ENCODE measurements at regions of chr12 and their contacts with region 1.

Region 1: DNA sequence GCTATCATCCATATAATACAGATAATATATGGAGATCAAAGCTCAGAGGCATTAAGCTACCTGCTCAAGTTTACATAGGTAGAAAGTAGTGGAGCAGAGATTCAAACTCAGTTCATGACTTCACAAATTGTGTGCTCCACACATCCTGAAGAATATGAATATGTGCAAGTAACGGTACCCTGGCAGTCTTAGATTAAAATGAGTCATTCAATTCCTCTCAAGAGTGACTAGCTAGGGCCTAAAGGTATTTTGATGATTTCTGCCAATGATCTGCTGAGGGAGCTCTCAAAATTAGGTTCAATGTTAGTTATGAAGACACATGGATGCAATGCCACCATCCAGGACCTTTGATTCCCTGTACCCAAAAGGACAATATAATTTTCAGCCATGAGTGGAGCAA is 58.9 kb downstream of the GRIP1 start:
- DNase-seq: no peak
- ATAC-seq: no peak
- H3K4me3 ChIP-seq: no peak overlapping the region
- H3K27ac ChIP-seq: no peak overlapping the region; the same call in 1 of the 2 replicates
- H3K4me1 ChIP-seq: peaks cover 47% of the 10 kb centered on the region
- H3K27me3 ChIP-seq: no peaks in the 10 kb centered on the region
- CTCF ChIP-seq: no peak
- EP300 ChIP-seq: no peak
- POLR2A ChIP-seq: no peak
- RAD21 ChIP-seq: no peak

Region 2: GRCh38 chr12:66398931-66399910 is 220.8 kb before region 1 on chr12:
- CTCF ChIA-PET with region 1: no interaction called
- POLR2A ChIA-PET with region 1: no interaction called
- RAD21 ChIA-PET with region 1: no interaction called
- SMC1A ChIA-PET with region 1: no interaction called
- in situ Hi-C with region 1: no loop called
- intact Hi-C with region 1: no loop called
- DNase-seq: no peak
- ATAC-seq: no peak
- H3K4me3 ChIP-seq: no peak overlapping the region
- H3K27ac ChIP-seq: no peak overlapping the region
- H3K4me1 ChIP-seq: no peaks in the 10 kb centered on the region
- H3K27me3 ChIP-seq: no peaks in the 10 kb centered on the region
- CTCF ChIP-seq: no peak
- EP300 ChIP-seq: no peak
- POLR2A ChIP-seq: no peak
- RAD21 ChIP-seq: no peak

Region 3: DNA sequence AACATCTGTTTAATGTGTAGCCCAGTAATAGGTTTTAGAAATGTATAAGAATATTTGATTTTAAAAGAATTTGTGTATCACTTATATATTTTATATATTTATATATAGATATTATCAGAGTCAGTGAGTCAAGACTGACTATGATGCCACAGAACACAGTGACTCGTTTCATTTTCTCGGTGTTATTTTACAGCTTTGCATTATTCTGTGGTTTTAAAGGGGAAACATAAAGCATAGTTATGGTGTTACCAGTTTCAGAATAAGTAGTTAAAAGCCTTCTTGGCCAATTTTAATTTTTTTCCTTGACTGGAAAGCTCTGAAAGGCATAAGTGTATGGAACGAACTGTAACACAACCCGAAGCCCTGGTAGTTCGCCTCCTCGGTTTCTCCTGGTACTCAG is 32.1 kb before region 1 on chr12:
- CTCF ChIA-PET with region 1: no interaction called
- POLR2A ChIA-PET with region 1: interaction called, 10 read pairs
- RAD21 ChIA-PET with region 1: no interaction called
- SMC1A ChIA-PET with region 1: no interaction called
- in situ Hi-C with region 1: no loop called
- intact Hi-C with region 1: no loop called
- DNase-seq: no peak
- ATAC-seq: peak; percentile 36; the same call in 1 of the 3 replicates
- H3K4me3 ChIP-seq: no peak overlapping the region
- H3K27ac ChIP-seq: peak overlapping the region; percentile 33; the same call in 1 of the 2 replicates
- H3K4me1 ChIP-seq: peaks cover 6% of the 10 kb centered on the region
- H3K27me3 ChIP-seq: no peaks in the 10 kb centered on the region
- CTCF ChIP-seq: no peak
- EP300 ChIP-seq: no peak
- POLR2A ChIP-seq: no peak
- RAD21 ChIP-seq: no peak

Region 4: DNA sequence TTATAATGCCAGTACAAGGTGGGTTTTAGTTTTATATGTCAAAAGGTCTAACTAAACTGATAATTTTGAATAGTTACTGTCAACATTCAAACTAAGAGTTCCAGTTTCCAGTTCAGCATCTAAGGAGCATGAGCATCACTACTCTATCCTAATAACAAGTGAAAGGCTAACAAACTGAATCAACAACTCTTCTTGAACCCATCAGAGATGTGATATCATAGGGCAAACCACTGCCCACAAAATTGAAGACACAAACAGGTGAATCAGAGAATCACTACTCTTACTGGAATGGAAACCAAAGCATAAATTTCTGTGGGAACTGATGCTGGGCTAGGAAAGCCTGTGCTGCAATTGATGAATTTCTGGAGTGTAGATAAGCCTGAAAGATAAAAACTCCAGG is 199.6 kb after region 1 on chr12:
- CTCF ChIA-PET with region 1: no interaction called
- POLR2A ChIA-PET with region 1: no interaction called
- RAD21 ChIA-PET with region 1: no interaction called
- SMC1A ChIA-PET with region 1: no interaction called
- in situ Hi-C with region 1: no loop called
- intact Hi-C with region 1: no loop called
- DNase-seq: no peak
- ATAC-seq: no peak
- H3K4me3 ChIP-seq: no peak overlapping the region
- H3K27ac ChIP-seq: no peak overlapping the region
- H3K4me1 ChIP-seq: no peaks in the 10 kb centered on the region
- H3K27me3 ChIP-seq: no peaks in the 10 kb centered on the region
- CTCF ChIP-seq: no peak
- EP300 ChIP-seq: no peak
- POLR2A ChIP-seq: no peak
- RAD21 ChIP-seq: no peak

Region 5: GRCh38 chr12:66942741-66943465 is 322.9 kb after region 1 on chr12:
- CTCF ChIA-PET with region 1: no interaction called
- POLR2A ChIA-PET with region 1: no interaction called
- RAD21 ChIA-PET with region 1: no interaction called
- SMC1A ChIA-PET with region 1: no interaction called
- in situ Hi-C with region 1: no loop called
- intact Hi-C with region 1: no loop called
- DNase-seq: no peak
- ATAC-seq: no peak
- H3K4me3 ChIP-seq: no peak overlapping the region
- H3K27ac ChIP-seq: no peak overlapping the region
- H3K4me1 ChIP-seq: no peaks in the 10 kb centered on the region
- H3K27me3 ChIP-seq: no peaks in the 10 kb centered on the region; a peak in 1 of 4 replicates
- CTCF ChIP-seq: no peak
- EP300 ChIP-seq: no peak
- POLR2A ChIP-seq: no peak
- RAD21 ChIP-seq: no peak

Measured in GM12878 (cell line).